Activated T-helper 1 cell treated with anti-CD3 and anti-CD28 coated beads, Interleukin-12 subunit alpha, Interleukin-12 subunit beta, Interleukin-2, Interleukin-4 antibody, amounts not matched to agents 30 ng/mL and 10 ng/mL and 1 ng/mL, durations not matched to agents 14 hours and 24 hours and 36 hours (primary cell): ENCODE measurements at regions of chr5 and their contacts with region 1.

Region 1: GRCh38 chr5:85441156-85441555 is 1056.5 kb upstream of the EDIL3 start:
- DNase-seq: no peak
- H3K4me3 Mint-ChIP-seq: no peak overlapping the region
- H3K27ac Mint-ChIP-seq: no peak overlapping the region
- H3K4me1 Mint-ChIP-seq: no peaks in the 10 kb centered on the region
- H3K27me3 Mint-ChIP-seq: no peaks in the 10 kb centered on the region

Region 2: DNA sequence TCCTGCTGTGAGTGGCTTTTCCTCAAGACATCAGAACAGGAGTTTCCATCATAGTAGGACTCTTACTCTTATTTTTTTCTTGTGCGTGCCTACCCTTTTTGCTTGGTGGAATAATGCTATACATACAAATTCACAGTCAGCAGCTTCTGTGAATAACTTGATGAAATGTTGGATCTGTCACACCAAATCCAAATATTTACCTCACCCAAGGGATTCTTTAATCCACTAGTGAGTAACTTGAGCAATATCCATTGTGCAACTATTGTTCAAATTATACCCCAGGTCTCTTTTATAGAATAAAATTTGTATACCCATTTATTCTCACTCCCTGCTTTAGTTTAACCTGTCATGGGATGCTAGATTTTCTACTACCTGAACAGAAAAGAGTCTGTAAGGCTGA is 21.8 kb after region 1 on chr5:
- intact Hi-C with region 1: loop called (anchors 1 kb)
- DNase-seq: no peak
- H3K4me3 Mint-ChIP-seq: no peak overlapping the region
- H3K27ac Mint-ChIP-seq: no peak overlapping the region
- H3K4me1 Mint-ChIP-seq: no peaks in the 10 kb centered on the region
- H3K27me3 Mint-ChIP-seq: no peaks in the 10 kb centered on the region